Activated CD4-positive, alpha-beta T cell treated with anti-CD3 and anti-CD28 coated beads, Interleukin-2, amount 10 ng/mL, durations not matched to agents 24 days and 14 days (primary cell): ENCODE measurements at regions of chr1 and their contacts with region 1.

Region 1: DNA sequence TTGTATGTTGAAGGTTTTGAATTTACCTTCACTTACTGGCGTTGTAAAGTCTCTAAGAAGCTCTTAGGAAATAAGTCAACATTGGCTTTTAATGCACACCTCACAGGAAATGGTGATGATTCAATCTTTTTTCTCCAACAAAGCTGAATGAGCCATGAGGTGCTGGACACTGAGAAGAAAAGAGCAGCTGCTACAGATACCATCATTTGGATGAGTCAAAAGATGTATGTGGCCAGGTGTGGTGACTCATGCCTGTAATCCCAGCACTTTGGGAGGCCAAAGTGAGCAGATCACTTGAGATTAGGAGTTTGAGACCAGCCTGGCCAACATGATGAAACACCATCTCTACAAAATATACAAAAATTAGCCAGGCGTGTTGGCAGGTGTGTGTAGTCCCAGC is 3.3 kb upstream of the IL23R start:
- DNase-seq: peak; percentile 83
- H3K4me3 Mint-ChIP-seq: peak overlapping the region; percentile 39
- H3K27ac Mint-ChIP-seq: peak overlapping the region; percentile 89
- H3K4me1 Mint-ChIP-seq: peaks cover 39% of the 10 kb centered on the region
- H3K27me3 Mint-ChIP-seq: no peaks in the 10 kb centered on the region

Region 2: DNA sequence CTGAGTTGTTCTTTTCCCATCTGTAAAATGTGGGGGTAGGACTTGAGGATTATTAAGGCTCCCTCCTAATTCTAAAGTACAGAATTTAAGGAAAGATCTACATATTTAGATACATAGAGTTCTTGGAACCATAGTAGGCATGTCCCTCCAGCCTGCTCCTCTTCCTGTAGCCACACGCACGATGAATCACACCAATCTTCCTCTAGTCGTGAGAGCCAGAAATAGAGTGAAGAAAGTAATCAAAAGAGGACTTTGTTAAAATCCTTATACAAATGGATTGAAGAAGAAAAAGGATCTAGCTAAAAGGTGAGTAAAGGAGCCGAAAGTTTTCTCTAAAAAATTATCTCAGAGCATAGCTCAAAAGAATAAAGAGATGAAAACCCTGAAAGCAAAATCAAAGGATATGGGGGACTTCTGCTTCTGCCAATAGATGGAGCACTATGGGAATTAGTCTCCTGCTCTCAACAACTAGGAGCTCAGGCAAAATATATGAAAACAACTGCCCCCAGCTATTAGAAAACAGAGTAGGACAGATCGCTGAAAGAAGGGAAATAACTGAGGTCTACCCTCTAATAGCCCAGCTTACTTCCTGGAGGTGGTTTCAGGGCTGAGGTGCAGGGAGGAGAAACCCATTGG is 36.7 kb before region 1 on chr1:
- intact Hi-C with region 1: no loop called
- DNase-seq: peak; percentile 48
- H3K4me3 Mint-ChIP-seq: no peak overlapping the region
- H3K27ac Mint-ChIP-seq: no peak overlapping the region
- H3K4me1 Mint-ChIP-seq: peaks cover 5% of the 10 kb centered on the region
- H3K27me3 Mint-ChIP-seq: no peaks in the 10 kb centered on the region

Region 3: DNA sequence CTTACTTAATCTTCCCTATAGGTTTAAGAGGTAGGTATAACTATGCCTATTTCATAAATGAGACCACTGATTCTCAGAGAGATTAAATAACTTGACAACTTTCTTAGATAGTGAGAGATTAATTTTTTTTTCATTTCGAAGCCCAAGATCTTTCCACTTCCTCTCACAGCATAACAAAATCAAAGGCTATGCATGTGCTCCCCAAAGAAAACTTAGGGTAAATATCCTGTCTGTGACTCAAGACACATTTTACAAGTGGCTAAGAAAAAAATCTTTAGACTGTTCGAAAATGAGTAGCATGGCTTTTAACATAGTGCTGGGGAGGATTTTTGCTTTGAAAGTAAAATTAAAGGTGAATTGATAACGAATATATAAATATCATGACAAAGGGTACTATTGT is 20.0 kb before region 1 on chr1:
- intact Hi-C with region 1: loop called (anchors 2 kb)
- DNase-seq: no peak
- H3K4me3 Mint-ChIP-seq: peak overlapping the region; percentile 13
- H3K27ac Mint-ChIP-seq: peak overlapping the region; percentile 57
- H3K4me1 Mint-ChIP-seq: peaks cover 22% of the 10 kb centered on the region
- H3K27me3 Mint-ChIP-seq: peaks cover 3% of the 10 kb centered on the region

Region 4: GRCh38 chr1:67194209-67194863 is 31.4 kb after region 1 on chr1:
- intact Hi-C with region 1: loop called (anchors 1 kb)
- DNase-seq: peak; percentile 66
- H3K4me3 Mint-ChIP-seq: no peak overlapping the region
- H3K27ac Mint-ChIP-seq: peak overlapping the region; percentile 86
- H3K4me1 Mint-ChIP-seq: peaks cover 8% of the 10 kb centered on the region
- H3K27me3 Mint-ChIP-seq: no peaks in the 10 kb centered on the region

Region 5: DNA sequence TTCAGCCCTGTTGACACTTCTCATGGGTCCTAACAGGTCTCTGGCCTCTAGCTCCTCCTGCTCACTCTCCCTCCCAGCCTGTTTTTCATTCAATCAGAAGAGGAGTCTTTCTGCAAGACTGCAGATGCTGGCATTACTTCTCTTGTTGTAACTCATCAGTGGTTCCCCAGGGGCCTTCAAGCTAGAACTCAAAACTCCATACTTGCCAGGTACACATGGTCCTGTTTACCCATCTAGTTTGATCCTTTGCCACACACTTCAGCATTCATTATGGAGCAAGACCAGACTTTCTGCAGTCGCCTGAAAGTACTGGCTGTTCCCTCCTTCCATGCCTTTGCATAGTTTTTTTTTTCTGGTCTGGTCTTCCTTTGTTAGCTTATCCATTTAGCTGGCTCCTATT is 219.3 kb after region 1 on chr1:
- intact Hi-C with region 1: no loop called
- DNase-seq: no peak
- H3K4me3 Mint-ChIP-seq: no peak overlapping the region
- H3K27ac Mint-ChIP-seq: no peak overlapping the region
- H3K4me1 Mint-ChIP-seq: peaks cover 3% of the 10 kb centered on the region
- H3K27me3 Mint-ChIP-seq: no peaks in the 10 kb centered on the region